Right ventricle myocardium superior (tissue), 1 donor: ENCODE measurements at regions of chr12 and their contacts with region 1.

Region 1: DNA sequence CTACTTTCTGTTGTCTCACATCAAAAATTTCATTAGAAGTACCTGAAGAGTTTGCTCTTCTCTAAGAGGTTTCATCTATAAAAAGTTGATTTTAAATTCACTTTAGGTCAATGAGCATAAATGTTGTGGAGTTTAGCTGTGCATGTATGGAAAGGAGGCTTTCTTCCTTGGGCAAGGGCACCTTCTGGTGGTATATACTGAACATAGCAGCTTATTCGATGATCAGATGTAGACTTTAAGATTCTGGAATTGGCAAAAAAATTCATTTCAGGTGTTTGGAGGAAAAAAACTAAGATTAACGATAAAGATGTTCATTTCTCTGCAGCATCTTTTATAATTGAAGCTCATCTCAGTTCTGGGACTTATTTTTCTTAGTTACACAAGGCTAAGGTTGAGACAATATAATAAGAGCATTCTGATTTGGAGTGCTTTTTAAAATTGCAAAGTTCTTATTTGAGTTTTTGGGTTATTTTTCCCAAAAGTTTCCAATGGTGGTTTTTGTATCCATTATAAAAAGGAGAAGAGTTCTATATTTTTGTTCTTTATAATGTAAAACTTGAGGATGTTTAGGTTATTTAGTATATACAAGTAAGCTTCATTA is 46.8 kb downstream of the TMEM117 start:
- DNase-seq: no peak
- ATAC-seq: peak; percentile 76

Region 2: GRCh38 chr12:43776498-43776897 is 106.2 kb before region 1 on chr12:
- intact Hi-C with region 1: loop called (anchors 10 kb)
- DNase-seq: no peak
- ATAC-seq: no peak

Region 3: DNA sequence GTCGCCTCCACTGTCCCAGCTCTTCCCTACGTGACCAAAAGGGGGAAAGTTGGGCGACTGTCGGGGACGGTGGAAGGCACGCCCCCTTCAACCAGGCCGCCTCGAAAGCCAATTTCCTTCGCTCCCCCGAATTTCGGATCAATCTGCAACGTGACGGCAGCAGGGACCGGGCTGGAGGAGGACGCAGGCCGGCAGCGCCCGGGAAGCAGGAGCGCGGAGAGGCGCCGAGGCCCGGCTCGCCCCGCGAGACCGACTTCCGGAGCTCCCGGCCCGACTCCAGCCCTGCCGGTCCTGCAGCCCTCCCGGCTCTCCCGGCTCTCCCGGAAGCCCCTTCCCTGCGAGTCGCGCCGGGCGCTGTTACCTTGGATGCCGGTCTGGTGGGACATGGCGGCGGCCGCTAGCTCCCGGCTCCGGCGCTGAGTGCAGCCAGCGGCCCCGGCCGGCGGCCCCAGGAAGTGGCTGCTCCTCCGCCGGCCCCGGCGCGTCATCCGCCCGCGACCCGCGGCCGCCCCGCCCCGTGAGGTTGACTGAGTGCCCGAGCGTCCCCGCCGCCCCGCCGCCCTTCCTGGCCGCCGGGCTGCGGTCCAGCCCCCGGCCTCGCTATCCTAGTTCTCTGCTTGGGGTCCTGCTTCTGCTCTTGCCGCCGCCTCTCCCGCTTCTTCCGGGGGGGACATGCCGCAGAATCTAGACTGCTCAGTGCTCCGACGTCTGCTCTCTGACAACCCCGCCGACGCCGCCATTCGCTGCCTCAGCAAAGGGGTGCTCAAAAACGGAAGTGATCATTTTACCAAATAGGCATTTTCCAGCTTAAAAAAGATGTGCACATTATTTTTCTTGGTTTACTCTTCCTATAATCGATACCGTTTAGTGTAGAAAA is 76.6 kb before region 1 on chr12 and contains the start of gene TWF1:
- intact Hi-C with region 1: loop called (anchors 10 kb)
- DNase-seq: peak; percentile 94
- ATAC-seq: peak; percentile 100
- total RNA-seq, gene TWF1: 11.9 TPM